ENCODE measurements at regions of chr16 and their contacts with region 1.

Region 1: DNA sequence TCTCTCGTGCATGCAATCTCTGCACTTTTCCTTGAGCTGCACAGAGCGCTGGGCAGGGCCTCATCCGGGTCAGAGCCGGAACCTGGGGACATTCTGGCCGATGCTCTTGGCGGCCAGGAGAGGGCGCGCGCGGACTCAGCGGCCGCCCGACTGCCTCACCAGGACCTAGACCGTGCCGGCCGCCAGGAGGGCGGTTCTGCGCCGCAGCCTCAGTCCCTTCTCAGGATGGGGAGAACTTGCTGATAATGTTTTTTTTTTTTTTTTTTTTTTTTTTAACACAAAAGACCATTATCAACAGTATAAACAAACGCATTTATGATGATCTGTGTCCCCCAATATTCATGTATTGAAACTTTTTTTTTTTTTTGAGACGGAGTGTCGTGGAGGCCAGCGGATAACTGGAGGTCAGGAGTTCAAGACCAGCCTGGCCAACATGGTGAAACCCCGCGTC is 8.1 kb upstream of the FLYWCH2 start:
- DNase-seq: peak; percentile 91
- H3K4me3 ChIP-seq: no peak overlapping the region
- H3K27ac ChIP-seq: peak overlapping the region in 1 of 4 donors; percentile 18
- H3K4me1 ChIP-seq: no peaks in the 10 kb centered on the region
- H3K27me3 ChIP-seq: no peaks in the 10 kb centered on the region
- CTCF ChIP-seq: peak; percentile 80 to 96 (median 94)
- EP300 ChIP-seq: no peak
- POLR2A ChIP-seq: no peak

Region 2: DNA sequence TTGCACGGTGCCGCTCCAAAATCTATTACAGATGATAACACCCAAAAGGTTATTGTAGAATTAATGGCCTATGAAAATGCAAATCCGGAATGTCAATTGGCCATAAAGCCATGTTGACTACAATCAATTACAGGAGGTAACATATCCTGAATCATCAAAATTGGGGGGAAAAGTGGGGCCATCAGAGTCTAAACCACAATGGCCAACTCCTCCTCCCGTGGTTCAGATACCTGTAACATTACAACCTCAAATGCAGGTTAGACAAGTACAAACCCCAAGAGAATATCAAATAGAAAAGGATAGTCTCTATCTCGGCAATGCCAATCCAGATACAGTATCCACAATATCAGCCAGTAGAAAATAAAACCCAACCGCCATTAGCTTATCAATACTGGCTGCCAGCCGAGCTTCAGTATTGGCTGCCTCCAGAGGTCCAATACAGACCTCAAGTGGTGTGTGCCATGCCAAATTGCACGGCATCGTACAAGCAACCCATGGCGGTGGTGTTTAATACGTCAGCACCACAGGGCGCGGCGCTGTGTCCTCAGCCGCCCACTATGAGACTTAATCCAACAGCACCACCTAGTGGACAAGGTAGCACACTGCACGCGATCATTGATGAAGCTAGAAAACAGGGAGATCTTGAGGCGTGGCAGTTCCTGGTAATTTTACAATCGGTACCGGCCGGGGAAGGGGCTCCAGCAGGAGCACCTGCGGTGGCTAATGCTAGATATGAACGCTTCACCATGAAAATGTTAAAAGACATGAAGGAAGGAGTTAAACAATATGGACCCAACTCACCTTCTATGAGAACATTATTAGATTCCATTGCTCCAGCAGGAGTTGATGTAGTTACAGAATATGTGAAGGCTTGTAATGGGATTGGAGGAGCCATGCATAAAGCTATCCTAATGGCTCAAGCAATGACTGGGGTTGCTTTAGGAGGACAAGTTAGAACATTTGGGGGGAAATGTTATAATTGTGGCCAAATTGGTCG is 52.0 kb after region 1 on chr16:
- intact Hi-C with region 1: loop called (anchors 2 kb)
- DNase-seq: peak; percentile 95
- H3K4me3 ChIP-seq: peak overlapping the region in 2 of 4 donors; percentile 17 to 19
- H3K27ac ChIP-seq: peak overlapping the region in 2 of 4 donors; percentile 29 to 44
- H3K4me1 ChIP-seq: peaks cover 0 to 10% (median 9%) of the 10 kb centered on the region in 4 donors
- H3K27me3 ChIP-seq: no peaks in the 10 kb centered on the region
- CTCF ChIP-seq: peak; percentile 84 to 96 (median 94)
- EP300 ChIP-seq: no peak
- POLR2A ChIP-seq: no peak